ENCODE measurements at regions of chr1 and their contacts with region 1.

Region 1: GRCh38 chr1:19918057-19918456 is 5.4 kb downstream of the PLA2G2E start:
- DNase-seq: peak; percentile 57 to 81 (median 66)
- H3K4me3 ChIP-seq: no peak overlapping the region
- H3K4me3 Mint-ChIP-seq: no peak overlapping the region
- H3K27ac ChIP-seq: no peak overlapping the region
- H3K27ac Mint-ChIP-seq: no peak overlapping the region
- H3K4me1 ChIP-seq: peaks cover 6% of the 10 kb centered on the region
- H3K4me1 Mint-ChIP-seq: peaks cover 3 to 6% (median 3%) of the 10 kb centered on the region in 3 donors
- H3K27me3 ChIP-seq: no peaks in the 10 kb centered on the region
- H3K27me3 Mint-ChIP-seq: peaks cover 3 to 6% of the 10 kb centered on the region in 2 donors

Region 2: DNA sequence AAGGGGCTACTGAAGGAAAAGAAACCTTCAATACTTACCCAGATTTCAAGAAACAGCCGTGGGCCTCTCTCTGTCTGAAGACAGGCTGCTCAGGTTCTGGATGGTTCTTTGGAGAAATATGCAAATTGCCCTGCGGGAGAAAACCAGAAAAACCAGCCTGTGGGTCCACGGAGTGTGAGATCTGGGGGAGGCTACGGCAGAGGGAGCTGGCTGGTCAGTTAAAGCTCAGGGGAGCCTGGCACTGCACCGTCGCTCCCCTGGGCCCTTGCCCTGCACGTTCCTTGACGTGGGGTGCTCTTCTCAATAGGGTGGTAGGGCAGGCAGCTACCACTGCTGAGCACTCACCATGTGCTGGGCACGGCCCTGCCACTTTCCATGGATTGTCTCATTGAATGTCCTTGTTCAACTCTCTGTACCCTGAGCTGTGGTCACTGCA is 131.1 kb before region 1 on chr1:
- CTCF ChIA-PET with region 1: no interaction called
- POLR2A ChIA-PET with region 1: no interaction called
- DNase-seq: no peak
- H3K4me3 ChIP-seq: no peak overlapping the region
- H3K4me3 Mint-ChIP-seq: no peak overlapping the region
- H3K27ac ChIP-seq: no peak overlapping the region
- H3K27ac Mint-ChIP-seq: no peak overlapping the region
- H3K4me1 ChIP-seq: no peaks in the 10 kb centered on the region
- H3K4me1 Mint-ChIP-seq: peaks cover 14 to 16% (median 15%) of the 10 kb centered on the region in 3 donors
- H3K27me3 ChIP-seq: no peaks in the 10 kb centered on the region
- H3K27me3 Mint-ChIP-seq: no peaks in the 10 kb centered on the region

Region 3: DNA sequence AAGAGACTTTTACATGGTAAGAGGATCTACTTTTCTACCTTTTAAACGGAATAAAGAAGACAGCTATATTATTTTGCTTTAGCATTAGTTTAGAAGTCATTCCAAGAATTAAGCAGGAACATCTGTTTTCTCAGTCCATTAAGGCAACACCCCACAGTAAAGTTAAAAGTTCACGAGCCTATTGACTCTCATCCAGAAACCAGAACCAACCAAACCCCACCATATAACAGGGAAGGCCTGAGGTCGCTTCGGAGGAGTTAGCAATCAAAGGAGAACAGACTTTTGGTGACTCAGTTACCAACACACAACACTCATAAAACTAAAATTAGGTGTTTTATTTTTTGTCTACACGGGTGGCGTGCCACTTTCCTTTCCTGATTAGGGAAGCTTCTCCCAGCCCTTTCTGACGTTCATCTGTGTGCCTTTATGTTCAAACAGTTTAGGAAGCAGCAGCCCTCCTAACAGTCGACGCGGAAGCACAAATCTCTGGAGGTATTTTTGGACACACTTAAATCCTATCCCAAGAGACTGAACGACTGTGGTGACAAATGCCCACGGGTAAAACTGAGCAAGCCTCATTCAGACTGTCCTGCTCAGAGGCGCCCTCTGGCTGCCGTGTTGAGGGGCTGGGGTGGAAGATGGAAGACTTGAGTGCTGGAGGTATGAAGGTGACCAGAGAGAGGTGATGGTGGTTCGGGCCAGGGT is 276.9 kb after region 1 on chr1:
- CTCF ChIA-PET with region 1: interaction called, 47 read pairs
- POLR2A ChIA-PET with region 1: no interaction called
- DNase-seq: peak; percentile 37 to 75 (median 56)
- H3K4me3 ChIP-seq: no peak overlapping the region
- H3K4me3 Mint-ChIP-seq: no peak overlapping the region
- H3K27ac ChIP-seq: no peak overlapping the region
- H3K27ac Mint-ChIP-seq: no peak overlapping the region
- H3K4me1 ChIP-seq: no peaks in the 10 kb centered on the region
- H3K4me1 Mint-ChIP-seq: peaks cover 0 to 4% (median 0%) of the 10 kb centered on the region in 3 donors
- H3K27me3 ChIP-seq: no peaks in the 10 kb centered on the region
- H3K27me3 Mint-ChIP-seq: peaks cover 17 to 56% of the 10 kb centered on the region in 2 donors

Measured in CD8-positive, alpha-beta memory T cell (primary cell).